CD14-positive monocyte (primary cell): ENCODE measurements at regions of chr12 and their contacts with region 1.

Region 1: DNA sequence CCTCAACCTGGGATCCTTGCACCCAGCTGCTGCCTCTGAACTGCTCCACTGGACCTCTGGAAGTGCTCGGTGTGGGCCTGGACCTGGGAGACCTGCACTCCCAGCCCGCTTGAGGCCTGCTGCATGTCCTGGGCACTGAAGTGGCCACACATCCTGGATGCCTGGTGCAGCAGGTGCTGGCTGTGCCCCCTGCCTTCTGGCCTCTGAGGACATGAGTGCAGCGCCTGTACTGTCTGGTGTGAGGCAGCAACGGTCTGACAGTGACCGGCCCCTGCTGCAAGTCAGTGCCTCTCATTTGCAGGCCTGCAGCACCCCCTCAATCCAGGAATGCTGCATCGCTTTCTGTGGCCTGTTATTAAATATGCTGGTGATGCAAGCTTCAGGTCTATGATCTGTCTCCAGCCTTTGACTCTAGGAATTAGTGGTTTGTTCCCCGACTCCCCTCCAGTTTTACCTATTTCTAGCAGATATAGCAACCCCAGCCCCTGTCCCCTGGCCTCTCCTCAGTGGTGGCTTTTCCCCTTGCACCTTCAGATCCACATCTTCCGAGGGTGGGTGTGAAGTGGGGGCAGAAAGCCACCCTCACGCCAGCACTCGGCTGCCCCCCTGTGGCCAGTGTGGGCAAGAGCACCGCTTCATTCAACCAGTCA is 3.6 kb downstream of the SMIM41 start:
- DNase-seq: peak; percentile 45 to 65 (median 65)
- H3K4me3 ChIP-seq: no peak overlapping the region
- H3K4me3 Mint-ChIP-seq: no peak overlapping the region
- H3K27ac ChIP-seq: no peak overlapping the region
- H3K27ac Mint-ChIP-seq: peak overlapping the region in 2 of 7 donors; percentile 36 to 44
- H3K4me1 ChIP-seq: peaks cover 15 to 18% of the 10 kb centered on the region in 2 donors
- H3K4me1 Mint-ChIP-seq: peaks cover 18% of the 10 kb centered on the region
- H3K27me3 ChIP-seq: no peaks in the 10 kb centered on the region
- H3K27me3 Mint-ChIP-seq: peaks cover 7 to 16% (median 10%) of the 10 kb centered on the region in 3 donors
- CTCF ChIP-seq: peak; percentile 99

Region 2: GRCh38 chr12:52006726-52007157 is 76.4 kb before region 1 on chr12 and contains the start of gene TAMALIN:
- intact Hi-C with region 1: no loop called
- DNase-seq: peak; percentile 63 to 79 (median 73)
- H3K4me3 ChIP-seq: peak within 1 kb of the TSS; percentile 55 to 90 (median 59)
- H3K4me3 Mint-ChIP-seq: peak within 1 kb of the TSS; percentile 94 to 95
- H3K27ac ChIP-seq: peak within 1 kb of the TSS; percentile 46 to 68
- H3K27ac Mint-ChIP-seq: peak within 1 kb of the TSS; percentile 70 to 95 (median 92)
- H3K4me1 ChIP-seq: peaks cover 33 to 50% of the 10 kb centered on the region in 2 donors
- H3K4me1 Mint-ChIP-seq: peaks cover 53% of the 10 kb centered on the region
- H3K27me3 ChIP-seq: peaks cover 9 to 32% of the 10 kb centered on the region in 2 donors
- H3K27me3 Mint-ChIP-seq: peaks cover 30 to 51% (median 49%) of the 10 kb centered on the region in 3 donors
- CTCF ChIP-seq: no peak
- polyA plus RNA-seq, gene TAMALIN: 0.63 to 118 (median 1.6) TPM

Region 3: GRCh38 chr12:52050761-52051541 is 32.2 kb before region 1 on chr12 and contains the start of gene NR4A1:
- intact Hi-C with region 1: no loop called
- DNase-seq: peak; percentile 92 to 99 (median 97)
- H3K4me3 ChIP-seq: peak within 1 kb of the TSS; percentile 60 to 87 (median 63)
- H3K4me3 Mint-ChIP-seq: peak within 1 kb of the TSS; percentile 94 to 99
- H3K27ac ChIP-seq: peak within 1 kb of the TSS; percentile 85 to 94
- H3K27ac Mint-ChIP-seq: peak within 1 kb of the TSS; percentile 94 to 97 (median 96)
- H3K4me1 ChIP-seq: peaks cover 36 to 72% of the 10 kb centered on the region in 2 donors
- H3K4me1 Mint-ChIP-seq: peaks cover 43% of the 10 kb centered on the region
- H3K27me3 ChIP-seq: peaks cover 0 to 24% of the 10 kb centered on the region in 2 donors
- H3K27me3 Mint-ChIP-seq: peaks cover 28 to 43% (median 39%) of the 10 kb centered on the region in 3 donors
- CTCF ChIP-seq: no peak
- polyA plus RNA-seq, gene NR4A1: 10.1 to 1,297 (median 41.4) TPM

Region 4: DNA sequence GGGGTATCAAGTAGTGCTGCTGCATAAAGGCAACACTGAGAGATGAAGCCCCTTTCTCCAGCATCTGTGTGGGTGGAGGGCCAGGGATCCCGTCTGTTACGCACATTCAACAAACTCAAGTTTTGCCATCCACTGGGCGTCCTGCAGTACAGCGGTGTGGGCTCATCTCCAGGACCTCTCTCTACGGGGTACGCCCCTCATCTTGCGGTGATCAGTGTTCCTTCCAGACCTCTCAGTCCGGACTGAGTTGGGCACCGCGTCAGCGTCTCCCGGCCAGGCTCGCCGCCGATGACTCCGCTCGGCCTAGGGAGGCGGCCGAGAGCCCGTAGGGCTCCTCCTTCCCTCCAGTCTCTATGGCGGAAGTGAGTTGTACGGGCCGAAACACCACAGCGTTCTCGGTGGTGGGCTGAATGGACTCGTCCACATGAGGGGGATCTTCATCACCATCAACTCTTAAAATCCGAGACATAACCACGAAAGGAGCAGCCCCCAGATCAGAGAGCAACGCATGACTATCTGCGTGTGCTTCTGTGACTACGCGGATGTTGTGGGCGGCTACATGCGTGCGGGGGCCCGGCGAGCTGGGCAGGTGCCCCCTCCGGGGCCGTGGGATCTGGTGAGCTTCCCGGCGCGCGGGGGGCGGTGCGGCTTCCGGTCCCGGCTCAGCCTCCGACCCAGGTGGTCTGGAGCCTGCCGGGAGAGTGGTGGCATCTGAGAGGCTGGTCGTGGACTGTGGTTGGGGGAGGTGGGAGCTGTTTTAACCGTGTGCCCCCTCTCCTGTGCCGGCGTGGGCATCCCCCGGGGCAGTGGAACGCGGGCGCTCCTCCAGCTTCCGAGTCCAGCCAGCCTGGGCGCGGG is 13.6 kb before region 1 on chr12 and contains the start of gene ATG101:
- intact Hi-C with region 1: loop called in 1 of 2 experiments (anchors 1 kb)
- DNase-seq: peak; percentile 93 to 94 (median 93)
- H3K4me3 ChIP-seq: peak within 1 kb of the TSS; percentile 63 to 93 (median 89)
- H3K4me3 Mint-ChIP-seq: peak within 1 kb of the TSS; percentile 95 to 96
- H3K27ac ChIP-seq: peak within 1 kb of the TSS; percentile 52 to 92
- H3K27ac Mint-ChIP-seq: peak within 1 kb of the TSS; percentile 92 to 100 (median 99)
- H3K4me1 ChIP-seq: peaks cover 20 to 21% of the 10 kb centered on the region in 2 donors
- H3K4me1 Mint-ChIP-seq: peaks cover 50% of the 10 kb centered on the region
- H3K27me3 ChIP-seq: peaks cover 0 to 5% of the 10 kb centered on the region in 2 donors
- H3K27me3 Mint-ChIP-seq: peaks cover 2 to 20% (median 20%) of the 10 kb centered on the region in 3 donors
- CTCF ChIP-seq: peak; percentile 65
- polyA plus RNA-seq, gene ATG101: 20.5 to 120 (median 26.4) TPM

Region 5: DNA sequence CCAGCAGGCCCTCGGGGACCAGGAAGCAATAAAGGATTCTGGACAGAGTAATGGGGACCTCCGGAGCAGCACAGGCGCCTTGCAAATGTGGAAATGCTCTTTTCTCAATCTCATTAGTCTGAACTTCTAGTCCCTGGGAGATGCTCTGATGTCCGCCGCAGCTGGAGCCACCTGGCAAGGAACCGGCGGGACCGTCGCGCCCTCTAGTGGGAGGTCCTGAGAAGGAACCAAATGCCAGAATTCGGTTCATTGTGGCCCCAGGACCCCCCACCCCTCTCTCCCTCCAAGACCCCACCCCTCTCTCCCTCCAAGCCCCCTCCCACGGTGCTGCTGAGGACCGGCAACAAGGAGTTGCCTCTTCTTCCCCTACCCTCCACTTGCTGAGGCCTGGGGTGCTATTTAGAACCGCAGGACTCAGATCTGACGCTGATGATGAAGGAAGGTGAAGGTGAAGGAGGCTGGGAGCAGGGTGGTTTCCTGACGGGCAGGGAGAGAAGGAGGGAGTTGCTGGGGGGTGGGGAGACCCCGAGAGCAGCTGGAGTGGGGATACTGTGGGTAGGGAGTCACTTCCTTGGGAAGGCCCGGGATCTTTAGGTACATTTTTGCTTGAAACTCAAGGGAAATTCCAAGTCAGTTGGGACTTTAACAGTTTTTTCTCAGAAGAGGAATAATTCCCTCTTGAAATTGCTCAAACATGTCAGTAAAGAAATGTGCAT is 38.9 kb after region 1 on chr12:
- intact Hi-C with region 1: loop called (anchors 1 to 5 kb)
- DNase-seq: peak; percentile 38 to 61 (median 57)
- H3K4me3 ChIP-seq: no peak overlapping the region
- H3K4me3 Mint-ChIP-seq: peak overlapping the region in 1 of 2 donors; percentile 63
- H3K27ac ChIP-seq: no peak overlapping the region
- H3K27ac Mint-ChIP-seq: peak overlapping the region in 4 of 7 donors; percentile 42 to 79 (median 70)
- H3K4me1 ChIP-seq: peaks cover 28 to 41% of the 10 kb centered on the region in 2 donors
- H3K4me1 Mint-ChIP-seq: peaks cover 48% of the 10 kb centered on the region
- H3K27me3 ChIP-seq: peaks cover 0 to 8% of the 10 kb centered on the region in 2 donors
- H3K27me3 Mint-ChIP-seq: peaks cover 23 to 38% (median 25%) of the 10 kb centered on the region in 3 donors
- CTCF ChIP-seq: peak; percentile 90

Region 6: GRCh38 chr12:52221912-52222457 is 138.9 kb after region 1 on chr12:
- intact Hi-C with region 1: no loop called
- DNase-seq: peak; percentile 59 to 77 (median 66)
- H3K4me3 ChIP-seq: no peak overlapping the region
- H3K4me3 Mint-ChIP-seq: peak overlapping the region in 1 of 2 donors; percentile 22
- H3K27ac ChIP-seq: no peak overlapping the region
- H3K27ac Mint-ChIP-seq: peak overlapping the region in 1 of 7 donors; percentile 22
- H3K4me1 ChIP-seq: peaks cover 30 to 41% of the 10 kb centered on the region in 2 donors
- H3K4me1 Mint-ChIP-seq: peaks cover 39% of the 10 kb centered on the region
- H3K27me3 ChIP-seq: peaks cover 0 to 5% of the 10 kb centered on the region in 2 donors
- H3K27me3 Mint-ChIP-seq: peaks cover 15 to 24% (median 23%) of the 10 kb centered on the region in 3 donors
- CTCF ChIP-seq: peak; percentile 74

Region 7: DNA sequence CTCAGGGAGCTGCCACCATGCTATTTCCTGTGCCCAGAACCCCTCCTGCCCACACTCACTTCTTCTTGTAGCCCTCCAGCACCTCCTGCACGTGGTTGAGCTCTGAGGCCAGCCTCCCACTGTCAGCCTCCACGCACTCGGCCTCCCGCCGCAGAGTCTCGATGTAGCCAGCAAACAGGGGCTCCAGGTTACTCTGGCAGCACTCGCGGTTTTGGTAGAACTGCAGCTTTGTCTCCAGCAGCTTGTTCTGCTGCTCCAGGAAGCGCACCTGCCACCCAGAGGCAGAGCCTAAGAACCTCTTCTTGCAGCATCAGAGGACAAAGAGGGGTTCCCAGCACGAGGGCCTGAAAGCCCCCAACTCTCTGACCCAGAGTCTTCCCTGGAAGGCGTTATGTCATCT is 236.0 kb after region 1 on chr12:
- intact Hi-C with region 1: no loop called
- DNase-seq: no peak
- H3K4me3 ChIP-seq: no peak overlapping the region
- H3K4me3 Mint-ChIP-seq: no peak overlapping the region
- H3K27ac ChIP-seq: no peak overlapping the region
- H3K27ac Mint-ChIP-seq: no peak overlapping the region
- H3K4me1 ChIP-seq: no peaks in the 10 kb centered on the region
- H3K4me1 Mint-ChIP-seq: no peaks in the 10 kb centered on the region
- H3K27me3 ChIP-seq: peaks cover 0 to 12% of the 10 kb centered on the region in 2 donors
- H3K27me3 Mint-ChIP-seq: peaks cover 18 to 48% (median 25%) of the 10 kb centered on the region in 3 donors
- CTCF ChIP-seq: no peak